ENCODE measurements at regions of chr16 and their contacts with region 1.

Region 1: GRCh38 chr16:11356573-11357331 is 11.5 kb downstream of the RMI2 start:
- DNase-seq: peak; percentile 78
- H3K4me3 Mint-ChIP-seq: no peak overlapping the region
- H3K27ac Mint-ChIP-seq: peak overlapping the region; percentile 28
- H3K4me1 Mint-ChIP-seq: peaks cover 63% of the 10 kb centered on the region
- H3K27me3 Mint-ChIP-seq: no peaks in the 10 kb centered on the region

Region 2: GRCh38 chr16:10743610-10744393 is 613.0 kb before region 1 on chr16 and contains the start of gene NUBP1:
- CTCF ChIA-PET with region 1: no interaction called
- intact Hi-C with region 1: loop called (anchors 10 kb)
- DNase-seq: peak; percentile 100
- H3K4me3 Mint-ChIP-seq: peak within 1 kb of the TSS; percentile 90
- H3K27ac Mint-ChIP-seq: peak within 1 kb of the TSS; percentile 100
- H3K4me1 Mint-ChIP-seq: peaks cover 26% of the 10 kb centered on the region
- H3K27me3 Mint-ChIP-seq: no peaks in the 10 kb centered on the region
- total RNA-seq, gene NUBP1: 22.3 to 23.0 TPM

Region 3: DNA sequence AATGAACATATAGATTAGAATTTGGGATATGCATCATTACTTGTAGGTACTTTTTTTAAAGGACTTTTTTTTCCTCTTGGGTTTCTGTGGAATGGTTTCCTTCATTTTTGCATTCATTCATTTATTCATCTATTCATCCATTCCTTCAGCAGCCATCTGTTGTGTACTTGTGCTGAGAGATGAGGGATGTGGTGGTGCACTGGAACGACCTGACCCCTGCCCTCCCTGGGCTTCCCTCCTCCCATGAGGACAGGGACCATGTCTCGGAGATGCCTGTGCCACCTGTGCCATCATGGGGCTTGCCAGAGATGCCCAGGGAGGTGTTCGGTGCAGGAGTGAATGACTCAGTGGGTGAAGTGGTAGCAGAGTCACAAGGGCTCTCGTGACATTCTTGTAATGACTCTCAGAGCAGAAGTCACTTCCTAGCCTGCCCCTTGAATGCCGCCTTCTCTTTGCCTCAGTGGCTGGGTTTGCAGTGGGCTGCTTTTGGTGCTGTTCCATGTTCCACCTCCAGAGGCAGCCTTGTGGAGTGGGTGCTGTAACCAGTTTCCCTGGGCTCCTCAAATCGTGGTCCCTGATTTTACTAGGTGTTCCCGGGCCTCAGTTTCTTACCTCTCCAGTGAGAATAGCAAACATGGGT is 368.5 kb before region 1 on chr16:
- CTCF ChIA-PET with region 1: interaction called, 3 read pairs
- intact Hi-C with region 1: loop called (anchors 1 kb)
- DNase-seq: peak; percentile 95
- H3K4me3 Mint-ChIP-seq: peak overlapping the region; percentile 22
- H3K27ac Mint-ChIP-seq: peak overlapping the region; percentile 87
- H3K4me1 Mint-ChIP-seq: peaks cover 79% of the 10 kb centered on the region
- H3K27me3 Mint-ChIP-seq: no peaks in the 10 kb centered on the region

Region 4: GRCh38 chr16:11263737-11264136 is 93.0 kb before region 1 on chr16:
- CTCF ChIA-PET with region 1: interaction called, 10 read pairs
- intact Hi-C with region 1: loop called (anchors 1 kb)
- DNase-seq: peak; percentile 78
- H3K4me3 Mint-ChIP-seq: peak overlapping the region; percentile 29
- H3K27ac Mint-ChIP-seq: peak overlapping the region; percentile 90
- H3K4me1 Mint-ChIP-seq: peaks cover 33% of the 10 kb centered on the region
- H3K27me3 Mint-ChIP-seq: no peaks in the 10 kb centered on the region

Region 5: GRCh38 chr16:11312718-11313492 is 43.8 kb before region 1 on chr16:
- CTCF ChIA-PET with region 1: interaction called, 3 read pairs
- intact Hi-C with region 1: loop called (anchors 1 kb)
- DNase-seq: peak; percentile 29
- H3K4me3 Mint-ChIP-seq: no peak overlapping the region
- H3K27ac Mint-ChIP-seq: no peak overlapping the region
- H3K4me1 Mint-ChIP-seq: peaks cover 34% of the 10 kb centered on the region
- H3K27me3 Mint-ChIP-seq: no peaks in the 10 kb centered on the region

Region 6: GRCh38 chr16:11370084-11370931 is 13.6 kb after region 1 on chr16:
- CTCF ChIA-PET with region 1: interaction called, 17 read pairs
- intact Hi-C with region 1: no loop called
- DNase-seq: peak; percentile 42
- H3K4me3 Mint-ChIP-seq: no peak overlapping the region
- H3K27ac Mint-ChIP-seq: no peak overlapping the region
- H3K4me1 Mint-ChIP-seq: peaks cover 11% of the 10 kb centered on the region
- H3K27me3 Mint-ChIP-seq: no peaks in the 10 kb centered on the region

Measured in activated naive CD4-positive, alpha-beta T cell treated with anti-CD3 and anti-CD28 coated beads for 36 hours (primary cell).